ENCODE measurements at regions of chr19 and their contacts with region 1.

Region 1: DNA sequence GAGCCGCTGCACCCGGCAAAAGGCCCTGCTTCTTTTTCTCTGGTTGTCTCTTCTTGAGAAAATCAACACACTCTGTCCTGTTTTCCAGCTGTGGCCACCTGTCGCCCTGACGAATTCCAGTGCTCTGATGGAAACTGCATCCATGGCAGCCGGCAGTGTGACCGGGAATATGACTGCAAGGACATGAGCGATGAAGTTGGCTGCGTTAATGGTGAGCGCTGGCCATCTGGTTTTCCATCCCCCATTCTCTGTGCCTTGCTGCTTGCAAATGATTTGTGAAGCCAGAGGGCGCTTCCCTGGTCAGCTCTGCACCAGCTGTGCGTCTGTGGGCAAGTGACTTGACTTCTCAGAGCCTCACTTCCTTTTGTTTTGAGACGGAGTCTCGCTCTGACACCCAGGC is 17.2 kb downstream of the LDLR start:
- DNase-seq: no peak
- H3K4me3 ChIP-seq: no peak overlapping the region
- H3K27ac ChIP-seq: no peak overlapping the region
- H3K4me1 ChIP-seq: no peaks in the 10 kb centered on the region
- H3K27me3 ChIP-seq: no peaks in the 10 kb centered on the region
- CTCF ChIP-seq: no peak
- EP300 ChIP-seq: no peak
- POLR2A ChIP-seq: no peak

Region 2: GRCh38 chr19:10946964-10947657 is 159.4 kb before region 1 on chr19:
- intact Hi-C with region 1: loop called in 1 of 4 experiments (anchors 10 kb)
- DNase-seq: no peak
- H3K4me3 ChIP-seq: no peak overlapping the region
- H3K27ac ChIP-seq: no peak overlapping the region
- H3K4me1 ChIP-seq: no peaks in the 10 kb centered on the region
- H3K27me3 ChIP-seq: no peaks in the 10 kb centered on the region
- CTCF ChIP-seq: no peak
- EP300 ChIP-seq: no peak
- POLR2A ChIP-seq: no peak

Region 3: GRCh38 chr19:11050323-11051114 is 56.0 kb before region 1 on chr19:
- intact Hi-C with region 1: loop called in 1 of 4 experiments (anchors 5 kb)
- DNase-seq: no peak
- H3K4me3 ChIP-seq: no peak overlapping the region
- H3K27ac ChIP-seq: no peak overlapping the region
- H3K4me1 ChIP-seq: no peaks in the 10 kb centered on the region
- H3K27me3 ChIP-seq: no peaks in the 10 kb centered on the region
- CTCF ChIP-seq: no peak
- EP300 ChIP-seq: no peak
- POLR2A ChIP-seq: no peak

Measured in ovary (tissue), 10 donors.